IMR-90 (cell line): ENCODE measurements at regions of chr1 and their contacts with region 1.

Region 1: GRCh38 chr1:199463521-199464128 is 563.9 kb upstream of the NR5A2 start:
- DNase-seq: peak; percentile 82
- ATAC-seq: peak; percentile 92
- H3K4me3 ChIP-seq: no peak overlapping the region
- H3K27ac ChIP-seq: no peak overlapping the region
- H3K4me1 ChIP-seq: no peaks in the 10 kb centered on the region; the same call in 1 of the 2 replicates
- H3K27me3 ChIP-seq: no peaks in the 10 kb centered on the region
- CTCF ChIP-seq: peak; percentile 71
- POLR2A ChIP-seq: no peak
- RAD21 ChIP-seq: peak; percentile 89

Region 2: GRCh38 chr1:198829944-198830343 is 633.7 kb before region 1 on chr1:
- CTCF ChIA-PET with region 1: no interaction called
- POLR2A ChIA-PET with region 1: no interaction called
- dilution Hi-C with region 1: no loop called
- in situ Hi-C with region 1: no loop called
- intact Hi-C with region 1: loop called (anchors 10 kb)
- DNase-seq: peak; percentile 35
- ATAC-seq: peak; percentile 65; the same call in 1 of the 2 replicates
- H3K4me3 ChIP-seq: no peak overlapping the region
- H3K27ac ChIP-seq: no peak overlapping the region
- H3K4me1 ChIP-seq: peaks cover 6% of the 10 kb centered on the region
- H3K27me3 ChIP-seq: no peaks in the 10 kb centered on the region
- CTCF ChIP-seq: peak; percentile 38
- POLR2A ChIP-seq: no peak
- RAD21 ChIP-seq: peak; percentile 35